Activated CD4-positive, alpha-beta T cell treated with anti-CD3 and anti-CD28 coated beads for 36 hours (primary cell): ENCODE measurements at regions of chr17 and their contacts with region 1.

Region 1: DNA sequence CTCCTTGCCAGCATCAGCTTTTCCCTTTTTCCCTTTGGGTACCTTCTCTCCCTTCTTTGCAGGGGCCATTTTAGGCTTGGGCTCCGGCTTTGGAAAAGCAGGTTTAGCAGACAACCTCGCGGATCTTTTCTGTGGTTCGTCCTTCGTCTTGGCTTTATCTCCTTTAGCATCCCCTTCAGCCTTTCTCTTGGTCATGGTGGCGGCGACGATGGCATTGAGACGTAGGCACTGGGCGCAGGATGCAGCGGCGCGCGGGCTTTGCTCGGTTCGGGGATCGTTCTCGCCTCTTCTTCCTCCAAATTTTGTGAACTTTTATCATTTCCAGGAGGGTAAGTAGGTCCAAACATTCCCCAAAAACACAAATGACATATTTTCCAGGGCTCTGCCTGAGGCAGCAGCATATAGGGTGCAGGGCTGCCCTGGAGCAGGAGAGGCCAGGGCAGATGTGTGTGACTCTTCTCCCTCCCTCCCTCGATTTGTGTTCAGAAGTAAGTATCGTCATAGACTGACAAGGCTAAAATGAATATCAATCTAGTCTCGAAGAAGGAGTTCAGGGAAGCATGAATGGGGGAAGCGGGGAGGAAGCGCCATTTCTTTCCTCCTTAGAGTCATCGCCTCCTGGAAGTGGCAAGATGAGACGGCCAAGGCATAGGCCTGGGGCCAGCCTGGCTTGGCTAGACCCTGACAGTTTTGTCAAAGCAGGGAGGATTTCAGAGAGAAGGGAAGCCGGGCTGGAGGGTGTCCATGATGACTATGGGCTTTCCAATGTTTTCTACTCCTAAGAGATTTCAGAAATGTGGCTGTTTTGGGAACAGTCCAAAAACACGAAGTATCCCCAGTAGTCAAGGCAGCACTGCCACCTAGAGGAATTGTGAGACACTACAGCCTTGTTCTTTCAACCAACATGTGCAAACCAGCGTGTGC is 13.2 kb downstream of the CHCT1 start:
- DNase-seq: peak; percentile 71
- ATAC-seq: peak; percentile 74
- H3K4me3 Mint-ChIP-seq: no peak overlapping the region
- H3K27ac Mint-ChIP-seq: no peak overlapping the region
- H3K4me1 Mint-ChIP-seq: no peaks in the 10 kb centered on the region
- H3K27me3 Mint-ChIP-seq: peaks cover 2% of the 10 kb centered on the region

Region 2: DNA sequence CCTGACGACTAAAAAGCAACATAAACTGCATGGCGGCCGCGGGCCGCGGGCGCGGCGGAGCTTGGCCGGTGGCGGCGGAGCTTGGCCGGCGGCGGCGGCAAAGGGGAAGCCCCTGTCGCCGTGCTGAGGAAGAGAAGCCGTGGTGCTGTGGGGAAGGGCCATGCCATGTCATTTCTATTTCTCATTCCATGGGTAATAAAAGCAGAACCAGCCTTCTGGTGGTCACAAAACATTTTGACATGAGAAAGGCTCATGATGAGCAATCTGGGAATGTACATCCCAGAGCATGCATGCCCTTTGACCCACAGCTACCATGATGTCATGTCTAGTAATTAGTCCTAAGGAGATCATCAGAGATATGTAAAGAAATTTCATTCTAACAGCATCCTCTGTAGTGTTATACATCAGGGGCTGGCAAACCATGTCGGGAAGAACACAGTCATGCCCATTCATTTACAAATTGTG is 332.8 kb before region 1 on chr17:
- CTCF ChIA-PET with region 1: no interaction called
- POLR2A ChIA-PET with region 1: no interaction called
- intact Hi-C with region 1: loop called (anchors 5 to 10 kb)
- DNase-seq: peak; percentile 61
- ATAC-seq: peak; percentile 89
- H3K4me3 Mint-ChIP-seq: peak overlapping the region; percentile 51
- H3K27ac Mint-ChIP-seq: no peak overlapping the region
- H3K4me1 Mint-ChIP-seq: peaks cover 14% of the 10 kb centered on the region
- H3K27me3 Mint-ChIP-seq: peaks cover 21% of the 10 kb centered on the region

Region 3: DNA sequence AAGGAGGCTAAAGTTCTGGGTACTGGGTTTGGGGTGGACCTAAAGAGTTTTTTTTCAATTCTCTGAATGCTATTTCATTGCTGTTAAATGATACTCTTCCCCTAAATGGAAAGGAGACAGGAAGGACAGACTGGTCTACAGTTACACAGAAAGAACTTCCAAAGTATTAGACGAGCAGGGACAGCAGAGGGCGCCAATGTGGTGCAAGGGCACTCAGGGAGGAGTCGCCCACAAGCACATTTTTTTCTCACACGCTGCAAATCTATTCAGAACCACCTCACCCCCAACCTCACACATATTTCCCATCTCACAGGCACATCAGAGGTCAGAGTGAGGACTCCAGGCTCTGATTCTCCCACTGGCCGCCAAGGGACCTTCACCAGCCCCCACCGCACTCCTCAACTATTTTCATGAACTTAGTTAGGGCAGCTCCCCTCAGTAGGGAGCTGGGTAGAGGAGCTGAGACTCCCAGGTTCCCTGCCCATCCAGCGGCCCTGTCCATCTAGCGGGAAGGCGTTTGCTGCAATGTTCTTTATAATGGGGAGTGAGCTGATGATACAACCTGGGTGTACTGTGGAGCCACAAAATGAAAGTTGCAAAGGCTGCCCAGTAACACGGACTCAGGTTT is 292.5 kb before region 1 on chr17:
- CTCF ChIA-PET with region 1: interaction called, 4 read pairs
- POLR2A ChIA-PET with region 1: no interaction called
- intact Hi-C with region 1: loop called (anchors 1 kb)
- DNase-seq: peak; percentile 92
- ATAC-seq: peak; percentile 80
- H3K4me3 Mint-ChIP-seq: no peak overlapping the region
- H3K27ac Mint-ChIP-seq: no peak overlapping the region
- H3K4me1 Mint-ChIP-seq: peaks cover 18% of the 10 kb centered on the region
- H3K27me3 Mint-ChIP-seq: peaks cover 75% of the 10 kb centered on the region

Region 4: DNA sequence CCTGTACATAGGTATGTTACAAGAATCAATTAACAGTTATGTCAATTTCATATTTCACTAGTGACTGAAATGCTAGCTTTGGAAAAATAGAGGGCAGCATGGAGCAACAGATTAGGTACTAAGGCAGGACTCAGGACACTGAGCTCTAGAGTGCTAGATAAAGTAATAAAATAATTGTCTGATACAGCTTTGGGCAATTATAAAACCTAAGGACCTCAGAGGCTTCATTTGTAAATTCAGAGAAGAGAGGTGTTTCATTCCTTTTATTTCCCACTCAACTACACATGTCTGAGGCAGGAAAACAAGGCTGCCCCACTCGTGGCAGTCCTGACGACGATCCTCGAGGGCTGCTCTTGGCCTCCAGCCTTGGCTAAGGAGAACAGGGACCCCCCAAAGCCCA is 204.3 kb before region 1 on chr17:
- CTCF ChIA-PET with region 1: no interaction called
- POLR2A ChIA-PET with region 1: no interaction called
- intact Hi-C with region 1: loop called (anchors 1 to 5 kb)
- DNase-seq: no peak
- ATAC-seq: no peak
- H3K4me3 Mint-ChIP-seq: no peak overlapping the region
- H3K27ac Mint-ChIP-seq: no peak overlapping the region
- H3K4me1 Mint-ChIP-seq: peaks cover 6% of the 10 kb centered on the region
- H3K27me3 Mint-ChIP-seq: no peaks in the 10 kb centered on the region

Region 5: DNA sequence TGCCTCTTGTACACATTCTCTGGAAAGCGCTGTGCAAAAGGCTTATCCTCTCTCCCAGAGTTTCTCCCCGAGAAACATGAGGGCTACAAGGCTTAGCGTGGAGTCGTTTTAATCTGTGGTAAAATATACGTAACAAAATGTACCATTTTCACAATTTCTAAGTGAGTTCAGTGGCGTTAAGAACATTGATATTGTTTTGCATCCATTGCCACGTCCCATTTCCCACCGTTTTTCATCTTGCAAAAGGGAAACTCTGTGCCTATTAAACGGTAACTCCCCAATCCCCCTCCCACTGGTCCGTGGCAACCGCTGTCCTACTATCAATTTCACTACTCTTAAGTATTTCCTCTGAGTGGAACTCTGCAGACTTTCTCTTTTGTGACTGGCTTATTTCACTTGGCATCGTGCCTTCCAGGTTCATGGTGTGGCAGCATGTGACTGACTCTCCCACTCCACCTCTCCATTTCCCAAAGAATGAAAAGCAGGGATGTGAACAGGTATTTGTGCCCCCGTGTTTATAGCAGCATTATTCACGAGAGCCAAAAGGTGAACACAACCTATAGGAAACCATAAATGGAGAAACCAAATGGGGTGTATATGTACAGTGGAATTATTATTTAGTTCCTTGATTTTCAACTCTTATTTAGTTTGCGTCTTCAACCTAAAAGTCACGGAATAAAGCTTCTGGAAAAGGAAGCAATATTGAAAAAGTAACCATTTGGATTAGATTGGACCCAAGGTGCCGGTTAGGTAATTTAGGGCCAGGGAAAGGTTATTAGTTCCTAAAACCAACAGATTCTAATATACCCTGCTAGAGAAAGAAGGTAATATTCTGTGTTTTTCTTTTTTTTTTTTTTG is 42.4 kb before region 1 on chr17:
- CTCF ChIA-PET with region 1: no interaction called
- POLR2A ChIA-PET with region 1: no interaction called
- intact Hi-C with region 1: no loop called
- DNase-seq: peak; percentile 68
- ATAC-seq: no peak
- H3K4me3 Mint-ChIP-seq: peak overlapping the region; percentile 77
- H3K27ac Mint-ChIP-seq: peak overlapping the region; percentile 99
- H3K4me1 Mint-ChIP-seq: peaks cover 39% of the 10 kb centered on the region
- H3K27me3 Mint-ChIP-seq: no peaks in the 10 kb centered on the region

Region 6: GRCh38 chr17:60757437-60757836 is 321.9 kb after region 1 on chr17:
- CTCF ChIA-PET with region 1: no interaction called
- POLR2A ChIA-PET with region 1: no interaction called
- intact Hi-C with region 1: no loop called
- DNase-seq: no peak
- ATAC-seq: no peak
- H3K4me3 Mint-ChIP-seq: no peak overlapping the region
- H3K27ac Mint-ChIP-seq: no peak overlapping the region
- H3K4me1 Mint-ChIP-seq: no peaks in the 10 kb centered on the region
- H3K27me3 Mint-ChIP-seq: no peaks in the 10 kb centered on the region

Region 7: GRCh38 chr17:61416540-61417363 is 981.2 kb after region 1 on chr17:
- CTCF ChIA-PET with region 1: no interaction called
- POLR2A ChIA-PET with region 1: no interaction called
- intact Hi-C with region 1: no loop called
- DNase-seq: peak; percentile 79
- ATAC-seq: peak; percentile 68
- H3K4me3 Mint-ChIP-seq: no peak overlapping the region
- H3K27ac Mint-ChIP-seq: no peak overlapping the region
- H3K4me1 Mint-ChIP-seq: no peaks in the 10 kb centered on the region
- H3K27me3 Mint-ChIP-seq: peaks cover 21% of the 10 kb centered on the region